ENCODE measurements at regions of chr6 and their contacts with region 1.

Region 1: GRCh38 chr6:2738373-2738979 is 12.2 kb downstream of the MYLK4 start:
- DNase-seq: peak; percentile 21 to 75 (median 43)
- ATAC-seq: peak; percentile 75
- H3K4me3 ChIP-seq: no peak overlapping the region
- H3K4me3 Mint-ChIP-seq: no peak overlapping the region
- H3K27ac ChIP-seq: no peak overlapping the region
- H3K27ac Mint-ChIP-seq: no peak overlapping the region
- H3K4me1 ChIP-seq: no peaks in the 10 kb centered on the region
- H3K4me1 Mint-ChIP-seq: no peaks in the 10 kb centered on the region
- H3K27me3 ChIP-seq: no peaks in the 10 kb centered on the region
- H3K27me3 Mint-ChIP-seq: peaks cover 4% of the 10 kb centered on the region
- CTCF ChIP-seq: peak; percentile 65

Region 2: GRCh38 chr6:2749969-2750600 is 11.6 kb after region 1 on chr6:
- CTCF ChIA-PET with region 1: interaction called, 12 read pairs
- POLR2A ChIA-PET with region 1: no interaction called
- intact Hi-C with region 1: no loop called
- DNase-seq: peak; percentile 47 to 82 (median 62)
- ATAC-seq: peak; percentile 82
- H3K4me3 ChIP-seq: no peak overlapping the region
- H3K4me3 Mint-ChIP-seq: no peak overlapping the region
- H3K27ac ChIP-seq: no peak overlapping the region
- H3K27ac Mint-ChIP-seq: no peak overlapping the region
- H3K4me1 ChIP-seq: no peaks in the 10 kb centered on the region
- H3K4me1 Mint-ChIP-seq: peaks cover 6% of the 10 kb centered on the region
- H3K27me3 ChIP-seq: peaks cover 0 to 7% of the 10 kb centered on the region in 2 experiments
- H3K27me3 Mint-ChIP-seq: peaks cover 29% of the 10 kb centered on the region
- CTCF ChIP-seq: peak; percentile 95